T-cell (primary cell): ENCODE measurements at regions of chr17 and their contacts with region 1.

Region 1: DNA sequence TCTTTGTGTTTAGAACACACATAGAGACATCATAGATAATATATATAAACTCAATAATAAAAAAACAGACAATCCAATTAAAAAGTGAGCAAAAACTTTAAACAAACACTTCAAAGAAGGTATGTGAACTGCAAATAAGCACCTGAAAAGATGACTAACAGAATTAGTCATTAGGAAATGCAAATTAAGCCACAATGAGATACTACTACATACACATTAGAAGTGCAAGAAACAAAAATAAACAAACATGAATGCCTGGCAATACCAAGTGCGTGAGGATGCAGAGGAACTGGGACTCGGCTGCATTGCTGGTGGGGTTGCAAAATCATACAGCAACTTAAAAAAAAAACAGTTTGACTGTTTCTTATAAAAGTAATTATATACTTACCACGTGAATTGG is 799.0 kb downstream of the KCNJ2 start:
- DNase-seq: no peak
- ATAC-seq: no peak
- H3K4me3 ChIP-seq: no peak overlapping the region
- H3K4me3 Mint-ChIP-seq: no peak overlapping the region
- H3K27ac ChIP-seq: no peak overlapping the region
- H3K27ac Mint-ChIP-seq: no peak overlapping the region
- H3K4me1 ChIP-seq: no peaks in the 10 kb centered on the region
- H3K4me1 Mint-ChIP-seq: no peaks in the 10 kb centered on the region
- H3K27me3 ChIP-seq: no peaks in the 10 kb centered on the region
- H3K27me3 Mint-ChIP-seq: no peaks in the 10 kb centered on the region

Region 2: GRCh38 chr17:71003736-71004135 is 35.4 kb after region 1 on chr17:
- CTCF ChIA-PET with region 1: no interaction called
- POLR2A ChIA-PET with region 1: interaction called in 1 of 2 experiments, 13 read pairs
- DNase-seq: no peak
- ATAC-seq: no peak
- H3K4me3 ChIP-seq: no peak overlapping the region
- H3K4me3 Mint-ChIP-seq: no peak overlapping the region
- H3K27ac ChIP-seq: no peak overlapping the region
- H3K27ac Mint-ChIP-seq: no peak overlapping the region
- H3K4me1 ChIP-seq: no peaks in the 10 kb centered on the region
- H3K4me1 Mint-ChIP-seq: no peaks in the 10 kb centered on the region
- H3K27me3 ChIP-seq: no peaks in the 10 kb centered on the region
- H3K27me3 Mint-ChIP-seq: no peaks in the 10 kb centered on the region

Region 3: GRCh38 chr17:71176331-71176730 is 208.0 kb after region 1 on chr17:
- CTCF ChIA-PET with region 1: no interaction called
- POLR2A ChIA-PET with region 1: no interaction called
- DNase-seq: no peak
- ATAC-seq: no peak
- H3K4me3 ChIP-seq: no peak overlapping the region
- H3K4me3 Mint-ChIP-seq: no peak overlapping the region
- H3K27ac ChIP-seq: no peak overlapping the region
- H3K27ac Mint-ChIP-seq: no peak overlapping the region
- H3K4me1 ChIP-seq: no peaks in the 10 kb centered on the region
- H3K4me1 Mint-ChIP-seq: no peaks in the 10 kb centered on the region
- H3K27me3 ChIP-seq: no peaks in the 10 kb centered on the region
- H3K27me3 Mint-ChIP-seq: peaks cover 0 to 1% of the 10 kb centered on the region in 2 donors